CD4-positive, alpha-beta T cell (primary cell): ENCODE measurements at regions of chr2 and their contacts with region 1.

Region 1: DNA sequence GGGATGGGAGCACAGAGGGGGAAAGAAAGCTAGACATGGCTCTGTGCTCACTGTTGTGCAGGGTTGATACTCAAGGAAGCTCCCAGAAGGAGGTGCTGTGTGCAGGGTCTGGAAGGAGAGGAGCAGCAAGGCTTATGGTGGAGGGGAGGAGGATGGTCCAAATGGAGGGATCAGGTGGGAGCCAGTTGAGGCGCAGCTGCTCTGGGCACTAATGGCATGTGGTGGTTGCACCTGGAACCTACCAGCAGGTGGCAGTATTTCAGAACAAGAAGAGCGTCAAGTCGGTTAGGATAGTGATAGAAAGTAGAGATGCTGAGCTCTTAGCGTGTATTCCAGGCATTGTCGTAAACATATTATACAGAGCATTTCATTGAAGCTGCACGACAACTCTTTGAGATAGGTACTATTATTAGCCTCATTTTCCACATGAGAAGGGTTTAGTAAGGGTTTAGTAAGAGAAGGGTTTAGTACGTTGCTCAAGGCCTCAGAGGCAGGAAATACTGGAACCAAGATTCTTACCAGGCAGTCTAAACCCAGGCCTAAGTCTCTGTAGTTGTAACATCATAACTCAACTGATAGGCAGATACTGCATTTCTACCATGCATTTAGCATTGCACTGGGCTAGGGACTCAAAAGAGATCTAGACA is 223.7 kb downstream of the CYP26B1 start:
- DNase-seq: peak; percentile 15 to 72 (median 36)
- ATAC-seq: no peak
- H3K4me3 ChIP-seq: no peak overlapping the region
- H3K4me3 Mint-ChIP-seq: no peak overlapping the region
- H3K27ac ChIP-seq: no peak overlapping the region
- H3K27ac Mint-ChIP-seq: no peak overlapping the region
- H3K4me1 ChIP-seq: no peaks in the 10 kb centered on the region
- H3K4me1 Mint-ChIP-seq: no peaks in the 10 kb centered on the region
- H3K27me3 ChIP-seq: no peaks in the 10 kb centered on the region
- H3K27me3 Mint-ChIP-seq: peaks cover 3% of the 10 kb centered on the region
- CTCF ChIP-seq: peak; percentile 70

Region 2: GRCh38 chr2:72150157-72150865 is 226.3 kb after region 1 on chr2:
- CTCF ChIA-PET with region 1: interaction called, 6 read pairs
- POLR2A ChIA-PET with region 1: no interaction called
- intact Hi-C with region 1: loop called in 1 of 2 experiments (anchors 2 kb)
- DNase-seq: peak; percentile 21 to 64 (median 44)
- ATAC-seq: peak; percentile 55
- H3K4me3 ChIP-seq: peak overlapping the region; percentile 34
- H3K4me3 Mint-ChIP-seq: peak overlapping the region; percentile 83
- H3K27ac ChIP-seq: no peak overlapping the region
- H3K27ac Mint-ChIP-seq: no peak overlapping the region
- H3K4me1 ChIP-seq: peaks cover 45% of the 10 kb centered on the region
- H3K4me1 Mint-ChIP-seq: peaks cover 45% of the 10 kb centered on the region
- H3K27me3 ChIP-seq: peaks cover 54 to 70% of the 10 kb centered on the region in 2 experiments
- H3K27me3 Mint-ChIP-seq: peaks cover 84% of the 10 kb centered on the region
- CTCF ChIP-seq: peak; percentile 70

Region 3: GRCh38 chr2:72579591-72580180 is 655.7 kb after region 1 on chr2:
- CTCF ChIA-PET with region 1: interaction called, 11 read pairs
- POLR2A ChIA-PET with region 1: no interaction called
- intact Hi-C with region 1: loop called in 1 of 2 experiments (anchors 1 kb)
- DNase-seq: peak in 3 of 14 experiments; percentile 31 to 43 (median 40)
- ATAC-seq: no peak
- H3K4me3 ChIP-seq: no peak overlapping the region
- H3K4me3 Mint-ChIP-seq: no peak overlapping the region
- H3K27ac ChIP-seq: no peak overlapping the region
- H3K27ac Mint-ChIP-seq: no peak overlapping the region
- H3K4me1 ChIP-seq: no peaks in the 10 kb centered on the region
- H3K4me1 Mint-ChIP-seq: peaks cover 7% of the 10 kb centered on the region
- H3K27me3 ChIP-seq: no peaks in the 10 kb centered on the region
- H3K27me3 Mint-ChIP-seq: no peaks in the 10 kb centered on the region
- CTCF ChIP-seq: peak; percentile 70

Region 4: DNA sequence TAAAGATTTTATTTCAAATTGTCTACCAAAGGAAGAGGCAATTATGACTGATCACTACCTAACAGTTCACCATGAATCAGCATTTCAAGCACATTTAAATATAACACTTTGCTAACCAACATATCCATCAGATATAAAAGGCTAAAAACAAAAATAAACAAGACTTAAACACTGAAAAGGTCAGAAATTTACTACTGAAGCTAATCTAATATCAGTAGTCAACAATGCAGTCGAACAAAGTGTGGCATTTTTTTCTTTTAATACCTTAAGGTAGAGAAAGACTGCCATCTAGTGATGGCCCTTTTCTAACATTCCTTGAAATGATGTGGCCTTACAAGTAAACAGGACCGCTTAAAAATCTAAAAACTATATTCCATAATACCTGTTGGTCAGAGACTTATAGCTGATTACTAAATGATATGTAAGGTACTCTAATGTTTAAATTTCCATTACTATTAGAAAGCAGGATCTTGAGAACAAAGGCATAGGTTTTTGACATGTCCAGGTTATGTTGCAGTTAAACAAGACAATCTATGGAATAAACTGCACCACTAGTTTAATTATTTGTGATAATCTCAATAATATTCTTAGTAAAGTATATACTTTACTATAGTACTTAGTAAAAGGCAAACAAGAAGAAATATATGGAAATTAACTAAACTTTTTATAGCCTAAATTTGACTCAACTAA is 821.8 kb after region 1 on chr2:
- CTCF ChIA-PET with region 1: interaction called, 3 read pairs
- POLR2A ChIA-PET with region 1: no interaction called
- intact Hi-C with region 1: loop called in 1 of 2 experiments (anchors 2 kb)
- DNase-seq: peak in 3 of 14 experiments; percentile 38 to 56 (median 50)
- ATAC-seq: no peak
- H3K4me3 ChIP-seq: no peak overlapping the region
- H3K4me3 Mint-ChIP-seq: no peak overlapping the region
- H3K27ac ChIP-seq: no peak overlapping the region
- H3K27ac Mint-ChIP-seq: no peak overlapping the region
- H3K4me1 ChIP-seq: no peaks in the 10 kb centered on the region
- H3K4me1 Mint-ChIP-seq: no peaks in the 10 kb centered on the region
- H3K27me3 ChIP-seq: no peaks in the 10 kb centered on the region
- H3K27me3 Mint-ChIP-seq: no peaks in the 10 kb centered on the region
- CTCF ChIP-seq: peak; percentile 75